ENCODE measurements at regions of chr11 and their contacts with region 1.

Region 1: GRCh38 chr11:125404776-125405435 is 91.2 kb downstream of the FEZ1 start:
- DNase-seq: peak; percentile 67
- H3K4me3 ChIP-seq: peak overlapping the region; percentile 21; the same call in 1 of the 2 replicates
- H3K27ac ChIP-seq: no peak overlapping the region
- H3K4me1 ChIP-seq: no peaks in the 10 kb centered on the region
- H3K27me3 ChIP-seq: peaks cover 44% of the 10 kb centered on the region

Region 2: GRCh38 chr11:124669193-124669592 is 735.7 kb before region 1 on chr11:
- in situ Hi-C with region 1: no loop called
- DNase-seq: peak; percentile 63
- H3K4me3 ChIP-seq: no peak overlapping the region
- H3K27ac ChIP-seq: no peak overlapping the region
- H3K4me1 ChIP-seq: 0 out of 2 replicates have a peak, but pooled peaks cover 8% of the 10 kb centered on the region
- H3K27me3 ChIP-seq: no peaks in the 10 kb centered on the region

Region 3: DNA sequence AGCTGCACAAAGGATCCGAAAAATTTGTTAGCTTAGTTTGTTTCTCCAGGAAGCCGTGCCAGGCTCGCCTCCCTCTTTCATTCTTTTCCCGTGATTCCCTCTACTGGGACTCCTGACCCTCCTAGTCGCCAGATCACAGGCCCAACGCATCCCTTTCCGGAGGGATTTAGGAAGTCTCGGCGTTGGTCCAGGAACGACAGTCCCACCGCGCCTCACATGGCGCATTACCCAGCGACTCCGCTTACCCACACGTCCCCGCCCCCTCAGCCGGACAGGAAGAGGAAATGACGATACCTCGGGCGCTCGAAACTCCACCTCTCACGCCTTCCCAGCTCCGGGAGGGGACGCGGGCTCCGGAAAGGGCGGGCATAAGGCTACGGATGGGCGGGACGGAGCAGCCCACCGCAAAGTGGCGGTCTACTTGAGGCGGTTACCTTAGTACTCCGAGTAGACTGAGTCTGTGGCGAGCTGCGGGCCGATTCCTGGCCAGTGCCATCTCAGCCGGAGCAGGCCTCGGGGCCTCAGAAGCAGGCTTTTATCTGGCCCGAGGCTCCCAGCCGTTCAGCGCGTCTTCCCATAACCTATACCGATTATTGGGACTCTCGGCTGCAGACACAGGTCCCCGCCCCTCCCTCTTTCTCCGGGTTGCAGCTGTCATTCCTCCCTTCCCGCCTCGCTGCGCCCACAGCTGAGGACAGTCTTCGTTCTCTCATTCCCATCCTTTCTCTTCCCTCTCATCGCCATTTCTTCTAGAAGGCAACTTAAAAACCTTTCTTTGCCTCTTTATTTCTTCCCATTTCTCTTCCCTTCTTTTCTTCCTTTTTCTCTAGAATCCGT is 450.9 kb before region 1 on chr11 and contains the start of gene CCDC15:
- in situ Hi-C with region 1: loop called (anchors 25 kb)
- DNase-seq: peak; percentile 100
- H3K4me3 ChIP-seq: peak within 1 kb of the TSS; percentile 81
- H3K27ac ChIP-seq: peak within 1 kb of the TSS; percentile 82
- H3K4me1 ChIP-seq: peaks cover 14% of the 10 kb centered on the region; the same call in 1 of the 2 replicates
- H3K27me3 ChIP-seq: no peaks in the 10 kb centered on the region
- total RNA-seq, gene CCDC15: 0.97 and 1.3 TPM in 2 replicates